ENCODE measurements at regions of chr3 and their contacts with region 1.

Region 1: GRCh38 chr3:149657926-149658733 is at the start of gene WWTR1:
- DNase-seq: peak; percentile 54
- ATAC-seq: peak; percentile 85
- H3K4me3 ChIP-seq: peak within 1 kb of the TSS; percentile 87
- H3K27ac ChIP-seq: peak within 1 kb of the TSS; percentile 97
- H3K4me1 ChIP-seq: peaks cover 10% of the 10 kb centered on the region
- H3K27me3 ChIP-seq: no peaks in the 10 kb centered on the region
- CTCF ChIP-seq: peak; percentile 23 to 52 (median 43); a peak in 5 of 6 replicates
- EP300 ChIP-seq: 0 out of 4 replicates have a peak, but pooled peaks of 1 of the 2 experiments have one; percentile 18
- POLR2A ChIP-seq: peak; percentile 77
- RAD21 ChIP-seq: peak; percentile 54
- polyA plus RNA-seq, gene WWTR1: 3.8 to 4.0 TPM

Region 2: GRCh38 chr3:149575961-149576564 is 82.1 kb before region 1 on chr3:
- CTCF ChIA-PET with region 1: interaction called, 230 read pairs
- POLR2A ChIA-PET with region 1: interaction called, 42 read pairs
- RAD21 ChIA-PET with region 1: interaction called, 272 read pairs
- SMC1A ChIA-PET with region 1: interaction called, 205 read pairs
- in situ Hi-C with region 1: no loop called
- intact Hi-C with region 1: no loop called
- DNase-seq: no peak
- ATAC-seq: peak; percentile 51
- H3K4me3 ChIP-seq: peak overlapping the region; percentile 10; the same call in 1 of the 2 replicates
- H3K27ac ChIP-seq: peak overlapping the region; percentile 70
- H3K4me1 ChIP-seq: peaks cover 59% of the 10 kb centered on the region
- H3K27me3 ChIP-seq: no peaks in the 10 kb centered on the region
- CTCF ChIP-seq: no peak
- EP300 ChIP-seq: 0 out of 4 replicates have a peak, but pooled peaks of 1 of the 2 experiments have one; percentile 35
- POLR2A ChIP-seq: no peak
- RAD21 ChIP-seq: no peak

Region 3: GRCh38 chr3:149603126-149604074 is 54.7 kb before region 1 on chr3:
- CTCF ChIA-PET with region 1: interaction called, 31 read pairs
- POLR2A ChIA-PET with region 1: interaction called, 26 read pairs
- RAD21 ChIA-PET with region 1: interaction called, 84 read pairs
- SMC1A ChIA-PET with region 1: interaction called, 68 read pairs
- in situ Hi-C with region 1: no loop called
- intact Hi-C with region 1: loop called (anchors 1 kb)
- DNase-seq: no peak
- ATAC-seq: no peak
- H3K4me3 ChIP-seq: no peak overlapping the region
- H3K27ac ChIP-seq: peak overlapping the region; percentile 12; the same call in 1 of the 2 replicates
- H3K4me1 ChIP-seq: peaks cover 28% of the 10 kb centered on the region
- H3K27me3 ChIP-seq: no peaks in the 10 kb centered on the region
- CTCF ChIP-seq: no peak
- EP300 ChIP-seq: peak; percentile 35 to 58; a peak in 1 of 4 replicates
- POLR2A ChIP-seq: no peak
- RAD21 ChIP-seq: no peak

Region 4: DNA sequence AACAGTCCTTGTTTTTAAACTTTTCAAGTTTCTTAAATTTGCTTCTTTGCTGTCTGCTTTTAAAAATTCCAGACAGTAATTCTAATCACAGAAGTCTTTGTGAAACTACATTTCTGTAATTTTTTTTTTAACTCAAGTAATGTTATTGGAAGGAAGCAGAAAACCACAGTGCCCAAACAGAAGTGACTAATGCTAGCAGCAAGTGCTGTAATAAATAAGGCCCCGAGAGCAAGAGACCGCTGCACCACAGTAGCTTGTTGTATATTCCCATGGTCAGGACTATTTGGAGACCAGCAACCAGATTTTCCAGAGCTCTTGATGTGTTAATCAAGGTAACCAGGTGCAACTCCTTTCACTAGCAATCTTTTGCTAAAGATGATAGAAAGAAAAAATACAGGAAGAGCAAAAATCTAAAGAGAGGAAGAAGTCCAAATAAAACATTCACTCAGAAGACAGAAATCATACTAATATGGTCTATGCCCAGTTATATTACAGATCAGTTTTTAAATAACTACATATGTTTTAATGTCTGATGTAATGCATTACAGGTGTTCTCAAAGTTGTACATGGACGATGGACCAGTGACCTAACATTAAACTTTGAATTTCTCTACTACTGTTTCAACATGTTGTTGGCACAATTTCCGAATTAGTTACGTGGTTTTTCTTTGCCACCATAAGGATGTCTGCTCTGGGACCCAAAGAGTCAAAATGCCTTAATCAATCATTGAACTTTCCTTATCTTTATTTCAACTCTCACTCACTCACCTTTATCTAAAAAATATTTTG is 36.7 kb before region 1 on chr3:
- CTCF ChIA-PET with region 1: interaction called, 7 read pairs
- POLR2A ChIA-PET with region 1: interaction called, 4 read pairs
- RAD21 ChIA-PET with region 1: interaction called, 8 read pairs
- SMC1A ChIA-PET with region 1: interaction called, 11 read pairs
- in situ Hi-C with region 1: no loop called
- intact Hi-C with region 1: loop called (anchors 2 kb)
- DNase-seq: no peak
- ATAC-seq: peak; percentile 89
- H3K4me3 ChIP-seq: no peak overlapping the region
- H3K27ac ChIP-seq: no peak overlapping the region
- H3K4me1 ChIP-seq: peaks cover 14% of the 10 kb centered on the region
- H3K27me3 ChIP-seq: no peaks in the 10 kb centered on the region
- CTCF ChIP-seq: no peak
- EP300 ChIP-seq: no peak
- POLR2A ChIP-seq: no peak
- RAD21 ChIP-seq: no peak

Region 5: DNA sequence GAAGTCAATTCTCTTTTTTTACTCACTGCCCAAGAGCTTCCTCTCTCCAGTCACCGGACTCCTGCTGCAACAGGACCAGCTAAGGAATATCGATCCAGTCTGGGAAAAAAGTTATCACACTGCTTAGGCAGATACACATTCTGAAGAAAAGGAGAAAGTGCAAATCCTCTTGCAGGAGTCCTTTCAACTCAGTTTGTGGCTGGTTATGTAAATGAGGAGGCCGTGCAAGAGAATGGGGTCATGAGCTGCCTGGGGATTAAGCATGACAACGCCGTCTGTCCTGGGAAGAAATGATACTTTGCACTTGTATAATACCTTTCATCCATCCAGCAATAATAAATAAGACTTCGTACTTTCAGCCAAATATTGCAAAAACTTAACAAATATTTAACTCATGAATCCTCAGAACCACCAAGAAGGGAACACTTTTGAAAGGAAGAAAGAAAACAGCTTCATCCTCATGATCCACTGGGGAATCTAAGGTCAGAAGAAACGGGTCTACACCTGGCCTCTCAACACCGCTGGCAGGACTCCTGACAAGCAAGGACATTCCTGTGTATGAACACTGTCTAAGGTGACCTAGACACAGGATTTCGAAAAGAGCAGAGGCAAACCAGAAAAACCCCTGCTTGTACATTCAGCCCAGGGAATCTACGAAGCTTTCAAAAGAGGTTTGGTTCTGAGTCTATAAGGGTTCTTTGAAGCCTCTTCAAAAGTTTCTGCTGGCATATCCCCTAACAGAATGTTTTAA is 12.8 kb after region 1 on chr3:
- CTCF ChIA-PET with region 1: interaction called, 12 read pairs
- POLR2A ChIA-PET with region 1: interaction called, 13 read pairs
- RAD21 ChIA-PET with region 1: interaction called, 36 read pairs
- SMC1A ChIA-PET with region 1: interaction called, 39 read pairs
- in situ Hi-C with region 1: no loop called
- intact Hi-C with region 1: no loop called
- DNase-seq: no peak
- ATAC-seq: peak; percentile 72
- H3K4me3 ChIP-seq: peak overlapping the region; percentile 4
- H3K27ac ChIP-seq: no peak overlapping the region
- H3K4me1 ChIP-seq: no peaks in the 10 kb centered on the region; the same call in 1 of the 2 replicates
- H3K27me3 ChIP-seq: no peaks in the 10 kb centered on the region
- CTCF ChIP-seq: no peak
- EP300 ChIP-seq: no peak
- POLR2A ChIP-seq: no peak
- RAD21 ChIP-seq: no peak

Region 6: GRCh38 chr3:149752051-149752787 is 94.1 kb after region 1 on chr3 and contains the start of gene COMMD2:
- CTCF ChIA-PET with region 1: interaction called, 6 read pairs
- POLR2A ChIA-PET with region 1: interaction called, 3 read pairs
- RAD21 ChIA-PET with region 1: interaction called, 12 read pairs
- SMC1A ChIA-PET with region 1: interaction called, 9 read pairs
- in situ Hi-C with region 1: no loop called
- intact Hi-C with region 1: no loop called
- DNase-seq: peak; percentile 84
- ATAC-seq: peak; percentile 100
- H3K4me3 ChIP-seq: peak within 1 kb of the TSS; percentile 85
- H3K27ac ChIP-seq: peak within 1 kb of the TSS; percentile 54
- H3K4me1 ChIP-seq: no peaks in the 10 kb centered on the region
- H3K27me3 ChIP-seq: no peaks in the 10 kb centered on the region
- CTCF ChIP-seq: peak; percentile 21 to 47 (median 46); a peak in 5 of 6 replicates
- EP300 ChIP-seq: no peak
- POLR2A ChIP-seq: peak; percentile 95
- RAD21 ChIP-seq: peak; percentile 40
- polyA plus RNA-seq, gene COMMD2: 59.4 to 97.0 TPM

Region 7: GRCh38 chr3:149902498-149903139 is 244.5 kb after region 1 on chr3:
- CTCF ChIA-PET with region 1: no interaction called
- POLR2A ChIA-PET with region 1: no interaction called
- RAD21 ChIA-PET with region 1: no interaction called
- SMC1A ChIA-PET with region 1: no interaction called
- in situ Hi-C with region 1: no loop called
- intact Hi-C with region 1: no loop called
- DNase-seq: no peak
- ATAC-seq: no peak
- H3K4me3 ChIP-seq: no peak overlapping the region
- H3K27ac ChIP-seq: no peak overlapping the region
- H3K4me1 ChIP-seq: no peaks in the 10 kb centered on the region
- H3K27me3 ChIP-seq: no peaks in the 10 kb centered on the region
- CTCF ChIP-seq: peak in 1 of 3 experiments; percentile 22; a peak in 1 of 6 replicates
- EP300 ChIP-seq: no peak
- POLR2A ChIP-seq: no peak
- RAD21 ChIP-seq: no peak

Region 8: GRCh38 chr3:150130404-150131100 is 472.4 kb after region 1 on chr3:
- CTCF ChIA-PET with region 1: no interaction called
- POLR2A ChIA-PET with region 1: no interaction called
- RAD21 ChIA-PET with region 1: no interaction called
- SMC1A ChIA-PET with region 1: no interaction called
- in situ Hi-C with region 1: no loop called
- intact Hi-C with region 1: no loop called
- DNase-seq: no peak
- ATAC-seq: no peak
- H3K4me3 ChIP-seq: no peak overlapping the region
- H3K27ac ChIP-seq: no peak overlapping the region
- H3K4me1 ChIP-seq: peaks cover 6% of the 10 kb centered on the region
- H3K27me3 ChIP-seq: no peaks in the 10 kb centered on the region; a peak in 1 of 4 replicates
- CTCF ChIP-seq: no peak
- EP300 ChIP-seq: no peak
- POLR2A ChIP-seq: no peak
- RAD21 ChIP-seq: no peak